Common myeloid progenitor, CD34-positive (primary cell): ENCODE measurements at regions of chr2 and their contacts with region 1.

Region 1: DNA sequence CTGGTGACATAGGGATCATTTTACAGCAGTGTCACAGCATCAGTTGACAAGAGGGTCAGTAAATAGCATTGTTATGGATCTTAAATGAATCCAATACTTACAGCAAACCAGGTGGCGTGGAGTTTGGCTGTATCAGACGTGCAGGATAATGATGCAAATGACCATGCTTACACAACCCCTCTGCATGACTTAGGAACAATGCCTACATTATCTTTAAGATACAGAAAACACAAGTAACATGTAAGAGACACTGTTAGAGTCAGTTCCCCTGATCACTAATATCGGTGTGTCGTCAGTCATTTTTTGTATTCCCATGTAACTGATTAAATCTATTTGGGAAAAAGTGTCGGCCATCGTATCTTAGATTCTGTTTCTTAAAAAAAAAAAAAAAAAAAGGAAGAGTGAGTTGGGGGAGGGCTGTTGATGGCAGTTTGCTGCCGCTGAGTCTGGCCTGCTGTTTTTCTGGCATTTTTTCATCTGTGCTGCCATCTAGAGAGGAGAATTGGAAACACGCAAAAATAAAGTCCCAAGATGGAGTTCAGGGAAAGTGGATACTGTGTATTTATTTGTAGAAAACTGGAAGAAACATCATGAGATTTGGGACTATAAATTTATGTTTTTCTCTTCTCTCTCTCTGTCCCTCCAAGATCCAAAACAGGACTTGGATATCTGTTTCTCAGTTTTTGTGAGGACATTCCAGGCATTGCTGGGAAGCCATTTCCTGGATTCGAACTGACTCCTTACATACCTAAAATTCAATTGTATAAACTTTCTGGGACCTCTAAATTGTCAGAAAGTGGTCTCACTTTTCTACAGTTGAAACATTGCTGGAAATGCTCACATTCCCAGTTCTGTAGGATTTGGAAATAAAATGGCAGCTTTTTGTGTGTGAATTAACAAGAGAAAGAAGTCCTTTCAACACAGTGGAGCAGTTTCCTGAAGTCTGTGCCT is 60.3 kb upstream of the AGPS start:
- DNase-seq: peak; percentile 82 to 89 (median 87)
- H3K4me3 ChIP-seq: peak overlapping the region in 2 of 7 experiments; percentile 52 to 68
- H3K27ac ChIP-seq: peak overlapping the region in 1 of 2 experiments; percentile 43
- H3K4me1 ChIP-seq: peaks cover under 1 to 17% (median 12%) of the 10 kb centered on the region in 4 experiments
- H3K27me3 ChIP-seq: no peaks in the 10 kb centered on the region

Region 2: DNA sequence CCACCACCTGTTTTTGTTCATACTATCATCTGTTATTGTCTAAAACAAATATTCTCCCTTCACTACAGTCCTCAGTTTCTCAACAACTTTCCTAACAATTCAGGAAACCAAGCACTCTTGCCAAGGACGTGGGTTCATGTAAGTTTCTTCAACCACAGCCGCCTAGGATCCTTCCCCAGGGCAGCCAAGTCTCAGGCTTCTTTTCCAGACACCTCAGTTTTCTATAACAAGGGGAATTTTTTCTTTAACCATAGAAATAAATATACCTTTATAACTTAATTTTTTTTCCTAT is 20.8 kb after region 1 on chr2:
- CTCF ChIA-PET with region 1: interaction called, 90 read pairs
- POLR2A ChIA-PET with region 1: no interaction called
- DNase-seq: no peak
- H3K4me3 ChIP-seq: peak overlapping the region in 4 of 7 experiments; percentile 2 to 55 (median 30)
- H3K27ac ChIP-seq: peak overlapping the region; percentile 51 to 73
- H3K4me1 ChIP-seq: peaks cover 20 to 64% (median 51%) of the 10 kb centered on the region in 4 experiments
- H3K27me3 ChIP-seq: no peaks in the 10 kb centered on the region

Region 3: GRCh38 chr2:177392373-177393202 is 60.3 kb after region 1 on chr2 and contains the start of gene AGPS:
- CTCF ChIA-PET with region 1: interaction called, 18 read pairs
- POLR2A ChIA-PET with region 1: no interaction called
- DNase-seq: peak; percentile 52 to 72 (median 62)
- H3K4me3 ChIP-seq: peak within 1 kb of the TSS; percentile 52 to 90 (median 76)
- H3K27ac ChIP-seq: peak within 1 kb of the TSS; percentile 42 to 77
- H3K4me1 ChIP-seq: peaks cover 32 to 62% (median 51%) of the 10 kb centered on the region in 4 experiments
- H3K27me3 ChIP-seq: no peaks in the 10 kb centered on the region

Region 4: DNA sequence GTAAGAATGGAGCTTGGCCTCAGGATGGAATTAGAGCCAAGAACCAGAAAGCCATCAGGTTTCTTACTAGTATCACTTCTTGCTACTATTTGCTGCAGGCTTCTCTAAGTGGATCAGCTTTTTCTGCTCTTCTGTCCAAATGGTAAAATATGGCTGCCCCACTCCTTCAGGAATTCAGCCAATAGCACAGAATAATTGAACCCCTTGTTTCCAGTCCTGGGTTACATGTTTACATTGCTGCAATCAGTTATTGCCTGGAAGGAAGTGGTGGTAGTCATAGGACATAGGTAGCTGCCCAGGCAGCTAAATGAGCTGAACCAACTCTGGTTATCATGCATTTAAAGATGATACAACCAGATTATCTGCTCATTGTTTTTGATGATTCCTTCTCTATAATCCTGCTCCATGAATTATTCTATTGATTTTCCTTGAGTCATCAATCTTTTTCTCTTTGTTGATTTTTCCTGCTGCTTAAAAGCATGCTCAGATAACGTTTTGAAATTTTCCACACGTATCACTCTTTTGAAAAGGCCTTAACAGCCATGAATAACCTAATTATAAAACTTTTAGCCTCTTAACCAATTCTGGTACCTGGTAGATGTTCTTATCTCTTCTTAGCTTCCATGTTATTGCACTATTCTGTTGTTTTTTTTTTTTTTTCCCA is 72.8 kb after region 1 on chr2:
- CTCF ChIA-PET with region 1: interaction called, 25 read pairs
- POLR2A ChIA-PET with region 1: no interaction called
- DNase-seq: no peak
- H3K4me3 ChIP-seq: peak overlapping the region in 1 of 7 experiments; percentile 4
- H3K27ac ChIP-seq: no peak overlapping the region
- H3K4me1 ChIP-seq: peaks cover 20 to 35% (median 25%) of the 10 kb centered on the region in 4 experiments
- H3K27me3 ChIP-seq: no peaks in the 10 kb centered on the region

Region 5: GRCh38 chr2:177419274-177419673 is 87.0 kb after region 1 on chr2:
- CTCF ChIA-PET with region 1: interaction called, 211 read pairs
- POLR2A ChIA-PET with region 1: no interaction called
- DNase-seq: no peak
- H3K4me3 ChIP-seq: no peak overlapping the region
- H3K27ac ChIP-seq: no peak overlapping the region
- H3K4me1 ChIP-seq: peaks cover 0 to 17% (median 9%) of the 10 kb centered on the region in 4 experiments
- H3K27me3 ChIP-seq: no peaks in the 10 kb centered on the region